Left cardiac atrium (tissue), 4 donors: ENCODE measurements at regions of chr5 and their contacts with region 1.

Region 1: GRCh38 chr5:55384072-55384471 is 76.3 kb downstream of the MTREX start:
- DNase-seq: no peak
- ATAC-seq: no peak

Region 2: GRCh38 chr5:55303238-55303690 is 80.8 kb before region 1 on chr5:
- intact Hi-C with region 1: no loop called
- DNase-seq: no peak
- ATAC-seq: peak in 1 of 2 donors; percentile 21

Region 3: GRCh38 chr5:55313870-55314617 is 70.0 kb before region 1 on chr5:
- intact Hi-C with region 1: no loop called
- DNase-seq: no peak
- ATAC-seq: no peak

Region 4: GRCh38 chr5:55331321-55331720 is 52.8 kb before region 1 on chr5:
- intact Hi-C with region 1: loop called in 1 of 2 experiments (anchors 5 kb)
- DNase-seq: no peak
- ATAC-seq: no peak

Region 5: GRCh38 chr5:55439008-55439407 is 54.9 kb after region 1 on chr5:
- intact Hi-C with region 1: no loop called
- DNase-seq: no peak
- ATAC-seq: peak; percentile 44 to 56